ENCODE measurements at regions of chr1 and their contacts with region 1.

Region 1: DNA sequence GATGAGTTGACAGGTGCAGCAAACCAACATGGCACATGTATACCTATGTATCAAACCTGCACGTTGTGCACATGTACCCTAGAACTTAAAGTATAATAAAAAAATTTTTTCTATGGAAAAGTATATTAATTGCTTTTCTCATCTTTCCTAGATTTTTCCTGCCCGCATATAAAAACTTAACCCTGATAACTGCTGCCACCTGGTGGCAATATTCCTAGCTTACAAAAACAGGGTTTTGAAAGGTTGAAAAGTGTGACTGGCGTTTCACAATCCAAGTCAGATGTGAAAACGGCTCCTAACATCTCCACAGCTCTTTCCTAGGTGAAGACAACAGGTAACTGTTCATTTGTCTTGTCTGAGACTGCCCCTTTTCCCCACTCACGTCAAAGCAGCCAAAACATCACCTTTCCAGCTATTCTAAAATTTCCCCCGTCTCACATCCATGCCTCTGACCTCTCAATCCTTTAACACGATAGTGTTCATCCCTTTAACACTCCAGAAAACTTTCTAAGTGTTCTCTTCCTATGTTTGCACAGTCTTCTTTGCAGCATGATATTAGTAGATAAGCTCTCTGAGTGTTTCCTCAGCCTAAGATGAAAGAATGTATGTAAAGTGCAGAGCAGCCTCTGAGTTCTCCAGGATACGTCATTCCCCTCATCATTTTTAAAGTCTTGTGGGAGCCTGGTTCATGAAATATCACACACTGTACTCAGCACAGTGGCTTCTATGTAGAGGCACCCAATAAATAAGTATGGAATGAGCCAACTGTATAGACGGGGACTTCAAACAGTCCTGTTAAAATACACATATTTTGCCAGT is 27.5 kb downstream of the OVGP1 start:
- DNase-seq: peak; percentile 64
- H3K4me3 Mint-ChIP-seq: no peak overlapping the region
- H3K27ac Mint-ChIP-seq: no peak overlapping the region
- H3K4me1 Mint-ChIP-seq: no peaks in the 10 kb centered on the region
- H3K27me3 Mint-ChIP-seq: peaks cover 61% of the 10 kb centered on the region
- CTCF ChIP-seq: peak; percentile 54

Region 2: DNA sequence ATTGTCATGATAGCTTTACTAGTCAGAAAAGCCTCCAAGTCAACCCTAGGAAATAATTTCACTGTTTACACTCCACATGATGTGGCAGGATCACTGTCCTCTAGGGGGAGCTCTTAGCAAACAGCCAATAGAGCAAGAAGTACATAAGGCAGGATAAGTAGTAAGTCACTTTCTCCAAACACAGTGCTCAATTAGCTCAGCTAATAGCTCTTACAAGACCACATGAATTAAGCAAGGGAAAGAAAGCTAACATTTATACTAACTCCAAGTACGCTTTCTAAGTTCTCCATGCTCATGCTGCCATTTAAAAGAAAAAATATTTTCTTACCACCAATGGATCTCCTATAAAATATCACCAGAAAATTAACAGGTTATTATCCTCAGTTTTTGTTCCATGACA is 369.4 kb before region 1 on chr1:
- CTCF ChIA-PET with region 1: interaction called, 8 read pairs
- POLR2A ChIA-PET with region 1: no interaction called
- intact Hi-C with region 1: loop called (anchors 1 kb)
- DNase-seq: peak; percentile 78
- H3K4me3 Mint-ChIP-seq: no peak overlapping the region
- H3K27ac Mint-ChIP-seq: no peak overlapping the region
- H3K4me1 Mint-ChIP-seq: peaks cover 5% of the 10 kb centered on the region
- H3K27me3 Mint-ChIP-seq: peaks cover 24% of the 10 kb centered on the region
- CTCF ChIP-seq: peak; percentile 80

Region 3: GRCh38 chr1:111222308-111223125 is 177.5 kb before region 1 on chr1:
- CTCF ChIA-PET with region 1: interaction called, 95 read pairs
- POLR2A ChIA-PET with region 1: interaction called, 6 read pairs
- intact Hi-C with region 1: loop called (anchors 1 kb)
- DNase-seq: peak; percentile 81
- H3K4me3 Mint-ChIP-seq: no peak overlapping the region
- H3K27ac Mint-ChIP-seq: peak overlapping the region; percentile 36
- H3K4me1 Mint-ChIP-seq: peaks cover 31% of the 10 kb centered on the region
- H3K27me3 Mint-ChIP-seq: no peaks in the 10 kb centered on the region
- CTCF ChIP-seq: peak; percentile 93

Region 4: DNA sequence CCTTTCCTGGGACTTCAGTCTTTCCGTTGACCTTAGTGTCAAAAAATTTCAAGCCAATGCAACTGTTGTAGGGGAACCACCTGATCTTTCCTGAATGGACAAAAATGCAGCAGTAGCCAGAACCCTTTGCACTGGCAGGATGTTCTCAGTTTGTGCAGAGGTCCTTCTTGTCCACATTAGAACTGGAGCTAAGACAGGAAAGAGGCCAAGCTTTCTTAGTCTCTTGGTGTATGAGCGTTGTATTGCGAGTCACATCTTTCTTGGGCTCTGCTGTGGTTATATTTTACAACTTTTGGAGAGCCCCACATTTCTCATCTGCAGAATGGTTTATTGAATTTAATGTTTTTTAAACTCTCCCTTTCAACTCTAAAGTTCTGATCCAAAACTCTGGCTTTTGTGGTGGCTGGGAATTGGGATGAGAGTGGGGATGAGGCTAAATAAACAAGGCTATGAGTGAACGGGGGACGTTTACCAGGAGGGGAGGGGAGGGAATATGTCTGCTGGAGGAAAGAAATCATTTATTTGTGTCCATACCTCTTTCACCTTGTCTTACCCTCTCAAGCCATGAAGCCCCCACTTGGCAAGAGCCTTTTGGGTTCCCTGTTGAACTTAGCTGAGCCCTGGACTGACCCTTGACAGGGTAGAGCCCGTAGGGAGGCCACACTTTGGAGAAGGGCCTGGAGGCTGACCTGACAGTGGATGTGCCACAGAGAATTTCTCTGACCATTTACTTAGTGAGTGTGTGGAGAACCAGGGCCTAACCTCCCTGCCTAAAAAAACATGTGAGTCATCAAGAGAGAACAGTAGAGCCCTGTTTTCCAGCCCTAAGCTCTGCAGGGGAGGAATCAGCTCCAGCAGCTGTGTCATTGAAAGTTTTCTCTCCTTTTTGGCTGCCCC is 171.9 kb before region 1 on chr1:
- CTCF ChIA-PET with region 1: interaction called, 95 read pairs
- POLR2A ChIA-PET with region 1: interaction called, 6 read pairs
- intact Hi-C with region 1: loop called (anchors 1 kb)
- DNase-seq: peak; percentile 91
- H3K4me3 Mint-ChIP-seq: peak overlapping the region; percentile 52
- H3K27ac Mint-ChIP-seq: peak overlapping the region; percentile 72
- H3K4me1 Mint-ChIP-seq: peaks cover 29% of the 10 kb centered on the region
- H3K27me3 Mint-ChIP-seq: no peaks in the 10 kb centered on the region
- CTCF ChIP-seq: no peak

Region 5: DNA sequence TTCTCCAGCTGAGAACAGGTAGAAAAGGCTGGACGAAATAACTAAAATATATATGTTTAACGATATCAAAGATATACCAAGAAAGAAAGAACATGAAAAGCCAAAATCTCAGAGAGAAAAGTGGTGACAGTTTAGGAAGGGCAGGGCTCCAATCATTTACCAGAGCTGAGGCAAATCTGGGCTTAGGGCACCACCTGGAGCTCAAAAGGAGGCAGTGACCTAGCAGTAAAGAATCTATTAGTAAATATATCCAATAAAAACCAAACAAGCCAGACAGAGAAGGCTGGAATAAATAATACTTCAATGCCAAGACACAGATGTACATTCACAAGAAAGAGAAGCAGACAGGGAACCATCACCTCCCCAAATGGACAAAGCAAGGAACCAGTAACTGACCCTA is 65.8 kb before region 1 on chr1:
- CTCF ChIA-PET with region 1: interaction called, 11 read pairs
- POLR2A ChIA-PET with region 1: no interaction called
- intact Hi-C with region 1: loop called (anchors 2 kb)
- DNase-seq: peak; percentile 59
- H3K4me3 Mint-ChIP-seq: no peak overlapping the region
- H3K27ac Mint-ChIP-seq: no peak overlapping the region
- H3K4me1 Mint-ChIP-seq: no peaks in the 10 kb centered on the region
- H3K27me3 Mint-ChIP-seq: no peaks in the 10 kb centered on the region
- CTCF ChIP-seq: peak; percentile 68

Region 6: GRCh38 chr1:111366256-111366655 is 33.7 kb before region 1 on chr1:
- CTCF ChIA-PET with region 1: interaction called, 18 read pairs
- POLR2A ChIA-PET with region 1: no interaction called
- intact Hi-C with region 1: no loop called
- DNase-seq: peak; percentile 8
- H3K4me3 Mint-ChIP-seq: no peak overlapping the region
- H3K27ac Mint-ChIP-seq: no peak overlapping the region
- H3K4me1 Mint-ChIP-seq: peaks cover 12% of the 10 kb centered on the region
- H3K27me3 Mint-ChIP-seq: no peaks in the 10 kb centered on the region
- CTCF ChIP-seq: no peak

Region 7: DNA sequence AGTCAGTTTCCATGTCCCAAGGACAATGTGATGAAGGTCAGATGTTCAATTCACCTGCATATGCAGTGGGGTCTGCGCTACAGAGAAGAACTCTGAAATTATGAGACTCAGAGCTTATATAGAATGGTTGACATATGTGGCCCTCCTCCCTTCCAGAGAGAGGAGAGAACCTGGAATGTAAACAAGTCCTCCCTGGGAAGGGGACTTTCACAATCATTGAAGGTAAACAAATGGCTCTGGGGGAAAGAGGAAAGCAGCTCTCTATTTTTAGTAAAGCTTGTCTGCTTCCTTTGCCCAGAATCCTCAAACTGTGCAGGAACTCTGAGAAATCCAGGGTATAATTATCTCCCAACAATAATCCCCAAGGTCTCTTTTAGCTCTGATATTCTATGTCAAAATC is 17.8 kb after region 1 on chr1:
- CTCF ChIA-PET with region 1: interaction called, 16 read pairs
- POLR2A ChIA-PET with region 1: no interaction called
- intact Hi-C with region 1: no loop called
- DNase-seq: peak; percentile 42
- H3K4me3 Mint-ChIP-seq: no peak overlapping the region
- H3K27ac Mint-ChIP-seq: peak overlapping the region; percentile 79
- H3K4me1 Mint-ChIP-seq: peaks cover 15% of the 10 kb centered on the region
- H3K27me3 Mint-ChIP-seq: no peaks in the 10 kb centered on the region
- CTCF ChIP-seq: no peak

Region 8: DNA sequence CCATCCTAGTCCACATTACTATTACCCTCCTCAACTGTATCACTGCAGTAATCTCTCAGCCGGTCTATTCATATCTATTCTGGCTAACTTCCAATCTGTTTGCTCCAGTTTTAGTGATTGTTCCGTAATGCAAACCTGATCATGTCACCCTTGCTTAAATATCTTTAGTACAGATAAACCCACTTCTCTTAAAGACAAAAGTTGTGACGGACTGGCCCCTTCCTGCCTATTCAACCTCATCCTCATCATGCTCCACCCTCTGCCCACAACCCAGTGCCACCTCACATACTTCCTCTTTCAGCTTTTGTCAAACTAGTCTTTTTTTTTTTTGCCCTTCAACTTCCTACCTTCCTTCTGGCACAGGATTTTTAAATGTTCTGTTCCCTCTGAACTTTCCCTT is 71.0 kb after region 1 on chr1:
- CTCF ChIA-PET with region 1: no interaction called
- POLR2A ChIA-PET with region 1: no interaction called
- intact Hi-C with region 1: no loop called
- DNase-seq: no peak
- H3K4me3 Mint-ChIP-seq: no peak overlapping the region
- H3K27ac Mint-ChIP-seq: no peak overlapping the region
- H3K4me1 Mint-ChIP-seq: no peaks in the 10 kb centered on the region
- H3K27me3 Mint-ChIP-seq: no peaks in the 10 kb centered on the region
- CTCF ChIP-seq: no peak

Measured in MCF 10A (cell line).